ENCODE measurements at regions of chr6 and their contacts with region 1.

Region 1: GRCh38 chr6:118776607-118777549 is 117.1 kb upstream of the ASF1A start:
- DNase-seq: no peak
- H3K4me3 ChIP-seq: no peak overlapping the region
- H3K27ac ChIP-seq: no peak overlapping the region
- H3K4me1 ChIP-seq: peaks cover 5 to 9% (median 7%) of the 10 kb centered on the region in 4 donors
- H3K27me3 ChIP-seq: no peaks in the 10 kb centered on the region
- CTCF ChIP-seq: peak; percentile 64 to 76 (median 65)
- EP300 ChIP-seq: no peak
- POLR2A ChIP-seq: no peak

Region 2: GRCh38 chr6:118580585-118581419 is 196.1 kb before region 1 on chr6:
- intact Hi-C with region 1: loop called (anchors 10 kb)
- DNase-seq: no peak
- H3K4me3 ChIP-seq: no peak overlapping the region
- H3K27ac ChIP-seq: peak overlapping the region in 2 of 4 donors; percentile 10 to 40
- H3K4me1 ChIP-seq: peaks cover 9 to 17% (median 15%) of the 10 kb centered on the region in 4 donors
- H3K27me3 ChIP-seq: no peaks in the 10 kb centered on the region
- CTCF ChIP-seq: peak; percentile 65 to 78 (median 75)
- EP300 ChIP-seq: no peak
- POLR2A ChIP-seq: no peak

Region 3: GRCh38 chr6:118659513-118660217 is 117.2 kb before region 1 on chr6:
- intact Hi-C with region 1: loop called (anchors 5 kb)
- DNase-seq: no peak
- H3K4me3 ChIP-seq: no peak overlapping the region
- H3K27ac ChIP-seq: no peak overlapping the region
- H3K4me1 ChIP-seq: peaks cover 0 to 7% (median 5%) of the 10 kb centered on the region in 4 donors
- H3K27me3 ChIP-seq: no peaks in the 10 kb centered on the region
- CTCF ChIP-seq: no peak
- EP300 ChIP-seq: no peak
- POLR2A ChIP-seq: no peak

Measured in esophagus muscularis mucosa (tissue), 4 donors.